Panc1 (cell line): ENCODE measurements at regions of chr13 and their contacts with region 1.

Region 1: DNA sequence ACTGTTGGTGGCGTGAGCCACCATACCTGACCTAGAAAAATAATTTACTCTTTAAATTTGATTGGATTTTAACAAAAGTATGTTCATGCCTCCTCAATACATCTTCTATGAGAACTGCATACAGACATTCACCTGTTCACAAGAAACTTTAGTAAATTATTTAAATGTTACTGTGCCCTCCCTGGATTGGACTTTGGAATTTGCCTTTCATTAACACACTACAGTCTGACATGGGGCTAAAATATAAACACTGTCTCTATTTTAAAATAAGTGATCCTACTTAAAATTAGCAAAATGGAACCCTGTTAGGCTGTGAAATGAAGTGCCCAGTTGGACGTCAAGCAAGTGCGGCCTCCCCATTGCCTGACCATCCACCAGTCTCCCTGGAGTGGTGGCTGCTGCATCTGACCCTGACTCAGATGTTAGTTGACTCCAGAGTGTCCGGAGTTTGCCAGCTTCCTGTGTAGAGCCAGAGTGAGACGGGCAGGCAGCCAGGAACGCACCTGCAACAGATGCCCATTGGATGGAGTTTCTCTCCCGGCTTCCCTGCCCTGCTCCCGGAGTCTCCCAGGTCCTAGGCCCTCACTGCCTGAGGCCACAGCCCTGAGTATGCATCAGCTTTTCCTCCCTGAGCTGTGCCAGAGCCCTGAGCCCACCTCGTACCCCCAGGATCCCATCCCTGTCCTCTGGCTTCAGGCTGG is 45.9 kb upstream of the ATP11A start:
- DNase-seq: no peak
- ATAC-seq: no peak
- H3K4me3 ChIP-seq: no peak overlapping the region
- H3K27ac ChIP-seq: no peak overlapping the region
- H3K4me1 ChIP-seq: no peaks in the 10 kb centered on the region
- H3K27me3 ChIP-seq: no peaks in the 10 kb centered on the region
- CTCF ChIP-seq: no peak

Region 2: GRCh38 chr13:112260108-112261055 is 383.5 kb before region 1 on chr13:
- CTCF ChIA-PET with region 1: no interaction called
- POLR2A ChIA-PET with region 1: no interaction called
- in situ Hi-C with region 1: no loop called
- intact Hi-C with region 1: no loop called
- DNase-seq: no peak
- ATAC-seq: no peak
- H3K4me3 ChIP-seq: no peak overlapping the region
- H3K27ac ChIP-seq: no peak overlapping the region
- H3K4me1 ChIP-seq: no peaks in the 10 kb centered on the region
- H3K27me3 ChIP-seq: peaks cover 2% of the 10 kb centered on the region; the same call in 1 of the 2 replicates
- CTCF ChIP-seq: no peak

Region 3: DNA sequence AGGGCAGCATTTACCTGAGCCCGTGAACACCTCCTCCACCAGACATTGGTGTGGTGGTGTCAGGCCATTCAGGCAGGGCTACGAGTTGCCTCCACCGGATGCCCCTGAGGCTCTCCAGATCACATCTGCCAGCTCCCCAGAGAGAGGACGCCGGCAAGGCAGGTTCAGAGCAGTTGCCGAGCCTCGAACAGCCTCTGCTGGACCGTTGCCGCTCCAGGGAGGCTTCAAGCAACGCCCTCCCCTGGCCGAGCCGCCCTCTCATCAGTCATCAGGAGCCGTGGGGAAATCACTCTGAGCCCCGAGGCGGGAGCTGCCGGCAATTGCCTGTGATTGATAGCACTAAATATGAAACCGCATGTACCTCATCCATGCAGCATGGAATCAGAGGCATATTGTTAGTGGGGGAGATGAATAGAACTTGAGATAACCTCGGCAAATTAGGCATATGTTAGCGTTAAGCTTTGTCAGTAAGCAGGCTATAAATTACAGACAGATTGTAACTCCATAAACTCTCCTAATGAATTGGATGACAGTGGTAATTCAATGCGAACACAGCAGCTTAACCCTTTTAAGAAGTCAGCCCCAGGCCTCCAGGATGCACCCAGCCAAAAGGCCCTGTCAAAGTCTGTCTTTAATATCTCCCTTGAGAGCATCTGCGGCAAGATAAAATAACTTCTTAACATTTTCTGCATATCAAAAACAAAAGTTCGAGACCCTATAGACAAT is 297.6 kb before region 1 on chr13:
- CTCF ChIA-PET with region 1: no interaction called
- POLR2A ChIA-PET with region 1: no interaction called
- in situ Hi-C with region 1: no loop called
- intact Hi-C with region 1: no loop called
- DNase-seq: no peak
- ATAC-seq: no peak
- H3K4me3 ChIP-seq: no peak overlapping the region
- H3K27ac ChIP-seq: no peak overlapping the region
- H3K4me1 ChIP-seq: no peaks in the 10 kb centered on the region
- H3K27me3 ChIP-seq: no peaks in the 10 kb centered on the region; the same call in 1 of the 2 replicates
- CTCF ChIP-seq: no peak

Region 4: GRCh38 chr13:112873851-112874750 is 230.2 kb after region 1 on chr13:
- CTCF ChIA-PET with region 1: interaction called, 3 read pairs
- POLR2A ChIA-PET with region 1: no interaction called
- in situ Hi-C with region 1: no loop called
- intact Hi-C with region 1: loop called (anchors 10 kb)
- DNase-seq: peak; percentile 27
- ATAC-seq: peak; percentile 93
- H3K4me3 ChIP-seq: no peak overlapping the region
- H3K27ac ChIP-seq: no peak overlapping the region; the same call in 1 of the 2 replicates
- H3K4me1 ChIP-seq: no peaks in the 10 kb centered on the region
- H3K27me3 ChIP-seq: no peaks in the 10 kb centered on the region
- CTCF ChIP-seq: peak; percentile 84

Region 5: DNA sequence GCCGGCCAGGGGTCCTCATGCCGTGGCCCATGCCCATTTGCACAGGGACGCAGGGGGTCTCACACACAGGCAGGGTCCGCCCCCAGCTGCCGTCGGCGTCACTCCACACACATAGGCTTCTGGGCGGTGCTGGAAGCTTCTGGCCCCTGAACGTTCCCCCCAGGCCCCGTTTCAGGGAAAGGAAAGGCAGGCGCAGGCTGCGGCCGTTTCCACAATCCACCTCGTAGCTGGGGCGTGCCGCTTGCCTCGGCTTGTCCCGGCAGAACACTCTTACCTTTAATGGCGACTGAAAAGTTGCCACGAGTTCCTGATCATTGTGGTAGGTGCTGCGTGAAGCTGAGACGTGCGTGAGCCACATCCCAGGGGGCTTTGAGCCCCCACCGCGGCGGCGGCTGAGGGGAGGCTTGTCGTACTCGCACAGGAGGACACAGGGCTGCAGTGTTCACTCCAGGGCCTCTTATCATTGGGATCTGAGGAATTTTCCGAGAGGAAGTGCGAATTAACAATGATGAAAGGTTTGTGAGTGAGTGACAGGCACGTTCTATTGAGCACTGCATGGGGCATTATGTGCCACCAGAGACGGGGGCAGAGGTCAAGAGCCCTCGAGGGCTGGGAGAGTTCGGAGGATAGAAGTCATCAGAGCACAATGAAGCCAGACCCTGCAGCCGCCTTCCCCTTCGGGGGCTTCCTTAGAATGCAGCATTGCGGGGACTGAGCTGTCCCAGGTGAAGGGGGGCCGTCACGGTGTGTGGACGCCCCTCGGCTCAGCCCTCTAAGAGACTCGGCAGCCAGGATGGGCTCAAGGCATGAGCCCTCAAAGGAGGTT is 378.7 kb after region 1 on chr13:
- CTCF ChIA-PET with region 1: no interaction called
- POLR2A ChIA-PET with region 1: no interaction called
- in situ Hi-C with region 1: no loop called
- intact Hi-C with region 1: no loop called
- DNase-seq: no peak
- ATAC-seq: no peak
- H3K4me3 ChIP-seq: no peak overlapping the region
- H3K27ac ChIP-seq: no peak overlapping the region
- H3K4me1 ChIP-seq: no peaks in the 10 kb centered on the region
- H3K27me3 ChIP-seq: no peaks in the 10 kb centered on the region
- CTCF ChIP-seq: no peak